ENCODE measurements at regions of chr4 and their contacts with region 1.

Region 1: GRCh38 chr4:44086753-44087152 is 361.9 kb downstream of the KCTD8 start:
- DNase-seq: no peak
- ATAC-seq: no peak
- H3K4me3 ChIP-seq: no peak overlapping the region
- H3K4me3 Mint-ChIP-seq: no peak overlapping the region
- H3K27ac ChIP-seq: no peak overlapping the region
- H3K27ac Mint-ChIP-seq: no peak overlapping the region
- H3K4me1 ChIP-seq: no peaks in the 10 kb centered on the region
- H3K4me1 Mint-ChIP-seq: no peaks in the 10 kb centered on the region
- H3K27me3 ChIP-seq: no peaks in the 10 kb centered on the region
- H3K27me3 Mint-ChIP-seq: no peaks in the 10 kb centered on the region
- CTCF ChIP-seq: no peak

Region 2: GRCh38 chr4:43754566-43754965 is 332.2 kb before region 1 on chr4:
- CTCF ChIA-PET with region 1: no interaction called
- POLR2A ChIA-PET with region 1: no interaction called
- intact Hi-C with region 1: no loop called
- DNase-seq: no peak
- ATAC-seq: no peak
- H3K4me3 ChIP-seq: no peak overlapping the region
- H3K4me3 Mint-ChIP-seq: no peak overlapping the region
- H3K27ac ChIP-seq: no peak overlapping the region
- H3K27ac Mint-ChIP-seq: no peak overlapping the region
- H3K4me1 ChIP-seq: no peaks in the 10 kb centered on the region
- H3K4me1 Mint-ChIP-seq: no peaks in the 10 kb centered on the region
- H3K27me3 ChIP-seq: no peaks in the 10 kb centered on the region
- H3K27me3 Mint-ChIP-seq: no peaks in the 10 kb centered on the region
- CTCF ChIP-seq: no peak

Region 3: GRCh38 chr4:44415251-44415650 is 328.5 kb after region 1 on chr4:
- CTCF ChIA-PET with region 1: no interaction called
- POLR2A ChIA-PET with region 1: no interaction called
- intact Hi-C with region 1: no loop called
- DNase-seq: no peak
- ATAC-seq: no peak
- H3K4me3 ChIP-seq: no peak overlapping the region
- H3K4me3 Mint-ChIP-seq: no peak overlapping the region
- H3K27ac ChIP-seq: no peak overlapping the region
- H3K27ac Mint-ChIP-seq: no peak overlapping the region
- H3K4me1 ChIP-seq: no peaks in the 10 kb centered on the region
- H3K4me1 Mint-ChIP-seq: no peaks in the 10 kb centered on the region
- H3K27me3 ChIP-seq: no peaks in the 10 kb centered on the region
- H3K27me3 Mint-ChIP-seq: peaks cover 4% of the 10 kb centered on the region
- CTCF ChIP-seq: no peak

Region 4: GRCh38 chr4:44425614-44426208 is 339.0 kb after region 1 on chr4:
- CTCF ChIA-PET with region 1: no interaction called
- POLR2A ChIA-PET with region 1: no interaction called
- intact Hi-C with region 1: no loop called
- DNase-seq: no peak
- ATAC-seq: no peak
- H3K4me3 ChIP-seq: no peak overlapping the region
- H3K4me3 Mint-ChIP-seq: no peak overlapping the region
- H3K27ac ChIP-seq: no peak overlapping the region
- H3K27ac Mint-ChIP-seq: no peak overlapping the region
- H3K4me1 ChIP-seq: no peaks in the 10 kb centered on the region
- H3K4me1 Mint-ChIP-seq: no peaks in the 10 kb centered on the region
- H3K27me3 ChIP-seq: no peaks in the 10 kb centered on the region
- H3K27me3 Mint-ChIP-seq: no peaks in the 10 kb centered on the region
- CTCF ChIP-seq: no peak

Region 5: DNA sequence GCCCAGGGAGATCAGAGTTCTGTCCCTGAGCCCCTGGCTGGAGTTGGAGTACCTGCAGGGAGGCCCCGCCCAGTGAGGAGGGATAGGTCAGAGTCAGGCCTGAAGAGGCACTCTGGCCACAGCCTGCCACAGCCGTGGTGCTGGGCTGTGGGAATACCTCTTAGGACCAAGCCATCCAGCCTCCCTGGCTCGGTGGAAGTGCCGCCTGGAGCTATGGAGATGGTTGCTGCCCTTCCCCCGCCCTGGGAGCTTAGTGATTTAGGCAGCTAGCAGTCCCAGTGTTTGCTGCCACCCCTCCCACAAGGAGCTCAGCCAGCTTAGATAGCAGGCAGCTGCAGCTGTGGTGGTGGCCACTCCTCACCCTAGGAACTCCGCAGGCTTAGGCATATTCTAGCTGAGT is 1085.9 kb after region 1 on chr4:
- CTCF ChIA-PET with region 1: no interaction called
- POLR2A ChIA-PET with region 1: no interaction called
- intact Hi-C with region 1: loop called in 1 of 2 experiments (anchors 5 kb)
- DNase-seq: peak in 1 of 14 experiments; percentile 4
- ATAC-seq: no peak
- H3K4me3 ChIP-seq: no peak overlapping the region
- H3K4me3 Mint-ChIP-seq: no peak overlapping the region
- H3K27ac ChIP-seq: no peak overlapping the region
- H3K27ac Mint-ChIP-seq: no peak overlapping the region
- H3K4me1 ChIP-seq: no peaks in the 10 kb centered on the region
- H3K4me1 Mint-ChIP-seq: no peaks in the 10 kb centered on the region
- H3K27me3 ChIP-seq: no peaks in the 10 kb centered on the region
- H3K27me3 Mint-ChIP-seq: no peaks in the 10 kb centered on the region
- CTCF ChIP-seq: no peak